ENCODE measurements at regions of chr2 and their contacts with region 1.

Region 1: DNA sequence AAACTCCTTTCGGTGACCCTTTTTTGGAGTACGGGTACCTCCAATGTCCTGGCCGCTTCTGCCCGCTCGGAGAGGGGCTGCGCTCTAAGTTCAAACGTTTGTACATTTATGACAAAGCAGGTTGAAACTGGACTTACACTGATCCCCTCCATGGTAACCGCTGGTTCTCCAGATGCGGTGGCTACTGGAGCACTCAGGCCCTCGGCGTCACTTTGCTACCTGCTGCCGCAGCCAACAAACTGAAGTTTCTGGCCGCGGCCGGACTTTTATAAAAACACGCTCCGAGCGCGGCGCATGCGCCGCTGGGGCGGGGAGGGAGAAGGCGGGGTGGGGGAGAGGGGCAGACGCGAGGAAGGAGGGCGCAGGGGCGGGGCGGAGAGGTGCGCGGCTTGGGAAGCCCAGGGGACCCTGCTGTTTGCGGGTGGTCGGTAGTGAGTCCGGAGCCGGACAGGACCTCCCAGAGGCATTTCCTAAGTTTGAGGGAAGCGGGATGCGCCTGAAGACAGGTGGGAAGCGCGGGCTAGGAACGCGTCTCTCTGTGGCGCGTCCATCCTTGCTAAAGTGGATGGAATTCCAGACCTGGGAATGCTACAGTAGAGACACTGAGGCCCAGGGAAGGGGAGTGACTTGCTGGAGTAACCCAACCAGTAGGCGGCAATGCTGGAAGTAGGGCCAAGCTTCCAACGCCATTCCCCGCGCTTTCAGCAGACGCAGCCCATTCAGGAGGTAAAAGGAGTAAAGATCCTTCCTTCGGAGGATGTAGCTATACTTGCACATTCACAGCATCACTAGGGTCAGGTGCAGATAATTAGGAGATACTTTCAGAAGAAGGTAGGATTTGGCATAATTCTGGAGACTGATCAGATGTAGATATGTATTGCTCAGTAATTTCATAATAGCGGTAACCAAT is at the start of gene CXCR4:
- DNase-seq: peak; percentile 88 to 93
- ATAC-seq: peak; percentile 26 to 49 (median 31)
- H3K4me3 ChIP-seq: peak within 1 kb of the TSS; percentile 98
- H3K4me3 Mint-ChIP-seq: peak within 1 kb of the TSS; percentile 90
- H3K27ac ChIP-seq: peak within 1 kb of the TSS; percentile 98
- H3K27ac Mint-ChIP-seq: peak within 1 kb of the TSS; percentile 85 to 90
- H3K4me1 ChIP-seq: peaks cover 32% of the 10 kb centered on the region
- H3K4me1 Mint-ChIP-seq: peaks cover 31 to 55% of the 10 kb centered on the region in 2 donors
- H3K27me3 ChIP-seq: no peaks in the 10 kb centered on the region
- H3K27me3 Mint-ChIP-seq: no peaks in the 10 kb centered on the region
- CTCF ChIP-seq: no peak
- total RNA-seq, gene CXCR4: 582 to 848 (median 741) TPM

Region 2: GRCh38 chr2:135913727-135914365 is 204.3 kb before region 1 on chr2:
- intact Hi-C with region 1: loop called (anchors 10 kb)
- DNase-seq: peak in 1 of 2 donors; percentile 84
- ATAC-seq: peak; percentile 59 to 71 (median 70)
- H3K4me3 ChIP-seq: no peak overlapping the region
- H3K4me3 Mint-ChIP-seq: no peak overlapping the region
- H3K27ac ChIP-seq: no peak overlapping the region
- H3K27ac Mint-ChIP-seq: no peak overlapping the region
- H3K4me1 ChIP-seq: no peaks in the 10 kb centered on the region
- H3K4me1 Mint-ChIP-seq: no peaks in the 10 kb centered on the region
- H3K27me3 ChIP-seq: no peaks in the 10 kb centered on the region
- H3K27me3 Mint-ChIP-seq: no peaks in the 10 kb centered on the region
- CTCF ChIP-seq: peak; percentile 94

Region 3: DNA sequence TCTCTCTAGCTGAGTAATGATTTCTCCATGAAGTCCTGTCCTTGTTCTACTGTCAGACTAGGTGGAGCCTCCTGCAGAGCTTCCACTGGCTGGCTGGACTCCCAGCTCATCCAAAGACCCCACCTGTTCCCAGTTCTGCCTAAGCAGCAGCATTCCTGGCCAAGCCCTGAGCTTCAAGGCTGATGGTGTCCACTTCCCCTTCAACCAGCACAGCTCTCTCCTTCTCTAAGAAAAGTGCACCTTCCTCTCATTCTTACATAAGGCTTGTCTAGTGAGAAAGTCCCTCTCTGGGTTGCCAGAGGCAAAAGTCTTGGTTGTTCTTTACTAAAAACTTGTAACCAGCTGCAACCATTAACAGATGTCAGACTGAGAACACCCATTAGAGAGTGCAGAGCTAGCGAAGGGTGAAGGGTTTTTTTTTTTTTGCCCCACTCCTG is 59.1 kb before region 1 on chr2:
- intact Hi-C with region 1: loop called (anchors 5 kb)
- DNase-seq: no peak
- ATAC-seq: no peak
- H3K4me3 ChIP-seq: no peak overlapping the region
- H3K4me3 Mint-ChIP-seq: no peak overlapping the region
- H3K27ac ChIP-seq: no peak overlapping the region
- H3K27ac Mint-ChIP-seq: no peak overlapping the region
- H3K4me1 ChIP-seq: peaks cover 6% of the 10 kb centered on the region
- H3K4me1 Mint-ChIP-seq: peaks cover 7 to 24% of the 10 kb centered on the region in 2 donors
- H3K27me3 ChIP-seq: no peaks in the 10 kb centered on the region
- H3K27me3 Mint-ChIP-seq: peaks cover 0 to 7% of the 10 kb centered on the region in 2 donors
- CTCF ChIP-seq: no peak

Region 4: DNA sequence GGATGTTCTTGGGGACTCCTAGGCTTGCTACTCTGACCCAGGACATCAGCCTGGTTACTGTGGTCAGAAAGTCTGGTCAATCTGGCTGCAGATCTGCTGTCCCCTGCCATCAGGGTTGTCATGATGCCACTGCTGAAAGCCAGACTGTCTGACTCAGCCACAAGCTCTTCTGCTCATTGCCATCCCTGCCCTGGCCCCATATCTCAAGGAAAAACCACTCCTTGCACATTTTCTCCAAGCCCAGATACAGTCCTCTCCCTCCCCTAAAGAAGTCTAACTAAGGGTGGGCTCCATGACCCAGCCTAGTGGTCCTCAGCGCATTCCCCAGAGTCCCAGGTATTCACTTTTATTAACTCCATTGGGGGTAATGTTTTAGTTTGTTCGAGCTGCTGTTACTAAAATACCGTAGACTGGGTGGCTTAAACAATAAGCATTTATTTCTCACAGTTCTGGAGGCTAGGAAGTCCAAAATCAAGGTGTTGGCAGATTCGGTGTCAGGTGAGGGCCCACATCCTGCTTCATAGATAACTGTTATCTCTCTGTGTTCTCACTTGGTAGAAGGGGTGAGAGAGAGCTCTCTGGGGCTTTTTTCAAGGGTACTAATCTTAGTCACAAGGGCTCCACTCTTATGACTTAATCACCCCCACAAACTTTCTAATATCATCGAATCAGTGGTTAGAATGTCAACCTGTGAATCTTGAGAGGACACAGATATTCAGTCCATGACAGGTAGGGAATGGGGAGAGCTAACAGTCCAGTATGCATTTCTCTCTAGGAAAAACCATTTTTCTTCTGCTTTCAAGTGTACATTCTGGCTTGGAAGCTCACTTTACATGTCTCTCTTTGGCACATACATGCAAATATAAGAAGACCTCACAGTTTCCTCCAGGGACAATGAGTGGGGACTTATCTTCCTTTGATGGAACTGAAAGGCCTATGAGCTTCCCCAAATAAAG is 94.5 kb after region 1 on chr2:
- intact Hi-C with region 1: loop called (anchors 5 kb)
- DNase-seq: peak; percentile 23 to 71
- ATAC-seq: peak; percentile 66 to 86 (median 79)
- H3K4me3 ChIP-seq: no peak overlapping the region
- H3K4me3 Mint-ChIP-seq: peak overlapping the region; percentile 41
- H3K27ac ChIP-seq: peak overlapping the region; percentile 58
- H3K27ac Mint-ChIP-seq: peak overlapping the region; percentile 83
- H3K4me1 ChIP-seq: peaks cover 42% of the 10 kb centered on the region
- H3K4me1 Mint-ChIP-seq: peaks cover 31 to 40% of the 10 kb centered on the region in 2 donors
- H3K27me3 ChIP-seq: no peaks in the 10 kb centered on the region
- H3K27me3 Mint-ChIP-seq: peaks cover 3 to 17% of the 10 kb centered on the region in 2 donors
- CTCF ChIP-seq: no peak

Region 5: GRCh38 chr2:136281281-136282114 is 163.3 kb after region 1 on chr2:
- intact Hi-C with region 1: loop called (anchors 1 kb)
- DNase-seq: peak; percentile 46 to 91
- ATAC-seq: peak; percentile 85 to 91 (median 85)
- H3K4me3 ChIP-seq: no peak overlapping the region
- H3K4me3 Mint-ChIP-seq: peak overlapping the region; percentile 13
- H3K27ac ChIP-seq: peak overlapping the region; percentile 66
- H3K27ac Mint-ChIP-seq: peak overlapping the region; percentile 91 to 92
- H3K4me1 ChIP-seq: peaks cover 35% of the 10 kb centered on the region
- H3K4me1 Mint-ChIP-seq: peaks cover 28 to 29% of the 10 kb centered on the region in 2 donors
- H3K27me3 ChIP-seq: no peaks in the 10 kb centered on the region
- H3K27me3 Mint-ChIP-seq: no peaks in the 10 kb centered on the region
- CTCF ChIP-seq: no peak

Region 6: DNA sequence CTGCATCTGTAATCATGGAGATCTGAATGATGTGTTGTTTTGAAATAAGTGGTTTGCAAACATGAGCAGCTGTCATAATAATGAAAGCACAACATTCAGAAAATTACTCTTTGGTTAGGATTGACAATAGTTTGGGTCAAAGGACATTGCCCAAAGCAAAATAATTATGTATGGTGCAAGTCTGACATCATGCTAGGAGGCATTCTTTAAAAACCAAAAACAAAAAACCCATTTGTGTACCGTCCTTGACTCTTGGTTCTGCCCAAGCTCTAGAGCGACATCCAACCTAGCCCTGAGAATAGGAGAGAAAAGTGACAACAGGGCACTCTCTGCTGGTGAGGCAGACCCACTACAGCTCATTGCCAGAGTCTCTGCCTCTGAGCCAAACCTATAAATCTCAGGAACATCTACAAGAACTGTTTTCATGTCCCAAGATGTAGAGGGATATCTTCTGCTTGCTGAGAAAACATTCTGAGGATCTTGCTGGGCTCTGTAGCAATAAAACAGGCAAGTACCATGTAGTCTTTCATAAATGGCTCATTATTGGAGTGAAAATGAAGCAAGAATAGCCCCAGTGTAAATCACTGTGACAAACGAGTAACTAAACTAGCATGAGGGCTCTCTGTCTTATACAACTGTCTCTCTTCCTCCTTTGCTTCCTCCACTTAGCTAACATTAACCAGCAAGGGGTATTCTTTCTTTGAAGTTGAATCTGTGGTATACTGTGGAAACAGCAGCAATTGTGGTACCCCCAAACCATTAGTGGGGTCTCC is 266.6 kb after region 1 on chr2:
- intact Hi-C with region 1: loop called (anchors 5 kb)
- DNase-seq: peak in 1 of 2 donors; percentile 83
- ATAC-seq: peak; percentile 73 to 83 (median 80)
- H3K4me3 ChIP-seq: no peak overlapping the region
- H3K4me3 Mint-ChIP-seq: no peak overlapping the region
- H3K27ac ChIP-seq: no peak overlapping the region
- H3K27ac Mint-ChIP-seq: peak overlapping the region in 1 of 2 donors; percentile 8
- H3K4me1 ChIP-seq: peaks cover 13% of the 10 kb centered on the region
- H3K4me1 Mint-ChIP-seq: peaks cover 7 to 17% of the 10 kb centered on the region in 2 donors
- H3K27me3 ChIP-seq: no peaks in the 10 kb centered on the region
- H3K27me3 Mint-ChIP-seq: no peaks in the 10 kb centered on the region
- CTCF ChIP-seq: peak; percentile 58

Measured in natural killer cell (primary cell).